Activated CD4-positive, alpha-beta T cell treated with anti-CD3 and anti-CD28 coated beads, Interleukin-2, amount 10 ng/mL, durations not matched to agents 24 days and 14 days (primary cell): ENCODE measurements at regions of chr7 and their contacts with region 1.

Region 1: DNA sequence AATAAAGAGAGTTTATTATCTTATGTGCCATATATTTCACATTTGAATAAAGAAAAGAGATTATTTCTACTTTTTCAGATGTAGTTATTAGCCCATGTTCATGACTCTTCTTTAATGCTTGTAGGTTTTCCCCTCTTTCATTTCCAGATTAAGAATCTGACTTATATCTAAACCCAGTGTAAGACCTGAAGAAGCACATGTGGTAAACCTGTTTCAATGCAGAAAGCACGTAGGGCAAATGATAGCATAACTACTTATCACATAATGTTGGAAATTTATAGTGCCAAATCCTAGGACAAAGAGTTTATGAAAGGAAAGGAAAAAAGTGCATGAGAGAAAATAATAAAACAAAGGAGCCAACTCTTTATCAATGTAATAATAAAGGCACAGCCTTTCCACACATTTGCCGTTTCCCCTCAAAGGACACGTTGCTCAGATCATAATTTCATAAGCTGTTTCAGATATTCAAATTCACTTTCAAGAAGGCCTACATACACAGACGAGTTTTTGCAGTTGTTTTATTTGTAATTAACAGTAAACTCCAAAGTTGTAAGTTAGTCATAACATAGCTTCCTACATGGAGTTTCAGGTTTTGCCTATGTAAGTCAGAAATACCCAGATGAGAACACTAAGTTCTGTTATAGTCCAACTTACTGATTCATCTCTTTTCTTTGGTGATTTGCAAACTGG is 88.8 kb upstream of the MDFIC start:
- DNase-seq: no peak
- H3K4me3 Mint-ChIP-seq: peak overlapping the region; percentile 67
- H3K27ac Mint-ChIP-seq: peak overlapping the region; percentile 95
- H3K4me1 Mint-ChIP-seq: peaks cover 26% of the 10 kb centered on the region
- H3K27me3 Mint-ChIP-seq: no peaks in the 10 kb centered on the region

Region 2: GRCh38 chr7:114777288-114777687 is 55.8 kb before region 1 on chr7:
- intact Hi-C with region 1: loop called (anchors 1 kb)
- DNase-seq: peak; percentile 3
- H3K4me3 Mint-ChIP-seq: no peak overlapping the region
- H3K27ac Mint-ChIP-seq: no peak overlapping the region
- H3K4me1 Mint-ChIP-seq: peaks cover 10% of the 10 kb centered on the region
- H3K27me3 Mint-ChIP-seq: peaks cover 2% of the 10 kb centered on the region

Region 3: GRCh38 chr7:114799628-114800028 is 33.4 kb before region 1 on chr7:
- intact Hi-C with region 1: loop called (anchors 1 kb)
- DNase-seq: no peak
- H3K4me3 Mint-ChIP-seq: peak overlapping the region; percentile 13
- H3K27ac Mint-ChIP-seq: peak overlapping the region; percentile 96
- H3K4me1 Mint-ChIP-seq: peaks cover 43% of the 10 kb centered on the region
- H3K27me3 Mint-ChIP-seq: no peaks in the 10 kb centered on the region

Region 4: GRCh38 chr7:114889646-114890285 is 56.7 kb after region 1 on chr7:
- intact Hi-C with region 1: loop called (anchors 1 kb)
- DNase-seq: peak; percentile 70
- H3K4me3 Mint-ChIP-seq: peak overlapping the region; percentile 45
- H3K27ac Mint-ChIP-seq: peak overlapping the region; percentile 88
- H3K4me1 Mint-ChIP-seq: peaks cover 45% of the 10 kb centered on the region
- H3K27me3 Mint-ChIP-seq: no peaks in the 10 kb centered on the region

Region 5: GRCh38 chr7:114922016-114922651 is 89.1 kb after region 1 on chr7 and contains the start of gene MDFIC:
- intact Hi-C with region 1: loop called (anchors 1 kb)
- DNase-seq: peak; percentile 89
- H3K4me3 Mint-ChIP-seq: peak within 1 kb of the TSS; percentile 96
- H3K27ac Mint-ChIP-seq: peak within 1 kb of the TSS; percentile 98
- H3K4me1 Mint-ChIP-seq: peaks cover 56% of the 10 kb centered on the region
- H3K27me3 Mint-ChIP-seq: no peaks in the 10 kb centered on the region
- total RNA-seq, gene MDFIC: 172 and 175 TPM in 2 replicates

Region 6: GRCh38 chr7:115008465-115009114 is 175.5 kb after region 1 on chr7:
- intact Hi-C with region 1: loop called (anchors 5 kb)
- DNase-seq: peak; percentile 72
- H3K4me3 Mint-ChIP-seq: peak overlapping the region; percentile 73
- H3K27ac Mint-ChIP-seq: peak overlapping the region; percentile 86
- H3K4me1 Mint-ChIP-seq: peaks cover 73% of the 10 kb centered on the region
- H3K27me3 Mint-ChIP-seq: no peaks in the 10 kb centered on the region